ENCODE measurements at regions of chr1 and their contacts with region 1.

Region 1: DNA sequence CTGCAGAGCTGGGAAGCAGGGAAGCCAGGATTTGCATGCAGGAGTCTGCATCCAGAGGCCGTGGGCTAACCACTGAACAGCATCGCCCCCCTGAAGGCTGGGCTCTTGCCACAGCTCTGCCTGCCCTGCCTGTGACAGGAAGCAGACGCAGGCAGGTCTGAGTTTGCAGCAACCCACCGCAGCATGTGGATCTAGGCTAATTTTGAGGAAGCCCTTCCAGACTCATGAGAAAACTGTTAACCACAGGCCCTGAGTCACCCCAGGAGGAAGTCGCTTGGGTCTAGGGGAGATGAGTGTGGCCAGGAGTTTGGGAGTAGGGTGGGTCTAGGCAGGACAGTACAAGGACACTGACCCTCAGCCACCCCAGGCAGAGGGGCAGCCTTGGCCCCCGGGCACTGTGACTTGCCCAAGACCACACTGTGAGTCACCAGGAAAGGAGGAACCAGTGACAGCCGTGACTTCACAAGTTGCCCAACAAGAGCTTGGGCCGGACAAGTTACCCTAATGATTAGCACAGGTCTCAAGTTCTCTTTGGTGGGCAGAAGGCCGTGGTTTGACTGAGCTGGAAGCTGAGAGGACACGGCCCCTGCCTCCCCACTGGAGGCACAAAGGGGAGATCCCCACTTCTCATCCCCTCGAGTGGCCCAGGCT is 904 bp downstream of the LAPTM5 start:
- DNase-seq: peak; percentile 91
- H3K4me3 Mint-ChIP-seq: peak overlapping the region; percentile 98
- H3K27ac Mint-ChIP-seq: peak overlapping the region; percentile 100
- H3K4me1 Mint-ChIP-seq: peaks cover 76% of the 10 kb centered on the region
- H3K27me3 Mint-ChIP-seq: no peaks in the 10 kb centered on the region

Region 2: GRCh38 chr1:30743584-30744059 is 13.0 kb before region 1 on chr1:
- CTCF ChIA-PET with region 1: interaction called, 16 read pairs
- intact Hi-C with region 1: loop called (anchors 1 kb)
- DNase-seq: peak; percentile 86
- H3K4me3 Mint-ChIP-seq: peak overlapping the region; percentile 59
- H3K27ac Mint-ChIP-seq: peak overlapping the region; percentile 100
- H3K4me1 Mint-ChIP-seq: peaks cover 89% of the 10 kb centered on the region
- H3K27me3 Mint-ChIP-seq: no peaks in the 10 kb centered on the region

Measured in activated naive CD4-positive, alpha-beta T cell treated with anti-CD3 and anti-CD28 coated beads for 36 hours (primary cell).